Dorsolateral prefrontal cortex (tissue), 120 donors: ENCODE measurements at regions of chr1 and their contacts with region 1.

Region 1: GRCh38 chr1:10444795-10445397 is 4.9 kb upstream of the CORT start:
- DNase-seq: no peak
- H3K4me3 ChIP-seq: no peak overlapping the region
- H3K27ac ChIP-seq: no peak overlapping the region
- H3K27me3 ChIP-seq: no peaks in the 10 kb centered on the region
- CTCF ChIP-seq: no peak

Region 2: DNA sequence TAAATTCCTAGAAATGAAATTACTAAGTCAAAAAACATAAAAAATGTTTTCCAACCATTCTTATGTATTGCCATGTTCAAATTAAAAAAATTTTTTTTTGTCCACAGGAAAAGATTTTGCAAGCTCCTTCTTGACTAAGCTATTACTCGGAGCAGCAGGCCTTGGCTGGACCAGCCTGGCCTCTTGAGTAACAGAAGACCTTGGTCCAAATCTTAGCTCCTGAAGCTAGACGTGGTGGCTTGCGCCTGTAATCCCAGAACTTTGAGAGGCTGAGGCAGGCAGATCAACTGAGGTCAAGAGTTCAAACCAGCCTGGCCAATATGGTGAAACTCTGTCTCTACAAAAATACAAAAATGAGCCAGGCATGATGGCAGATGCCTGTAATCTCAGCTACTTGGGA is 698.7 kb before region 1 on chr1:
- intact Hi-C with region 1: loop called in 1 of 2 experiments (anchors 10 kb)
- DNase-seq: no peak
- H3K4me3 ChIP-seq: no peak overlapping the region
- H3K27ac ChIP-seq: peak overlapping the region in 1 of 59 donors; percentile 19
- H3K27me3 ChIP-seq: no peaks in the 10 kb centered on the region
- CTCF ChIP-seq: no peak